K562 (cell line): ENCODE measurements at regions of chr9 and their contacts with region 1.

Region 1: DNA sequence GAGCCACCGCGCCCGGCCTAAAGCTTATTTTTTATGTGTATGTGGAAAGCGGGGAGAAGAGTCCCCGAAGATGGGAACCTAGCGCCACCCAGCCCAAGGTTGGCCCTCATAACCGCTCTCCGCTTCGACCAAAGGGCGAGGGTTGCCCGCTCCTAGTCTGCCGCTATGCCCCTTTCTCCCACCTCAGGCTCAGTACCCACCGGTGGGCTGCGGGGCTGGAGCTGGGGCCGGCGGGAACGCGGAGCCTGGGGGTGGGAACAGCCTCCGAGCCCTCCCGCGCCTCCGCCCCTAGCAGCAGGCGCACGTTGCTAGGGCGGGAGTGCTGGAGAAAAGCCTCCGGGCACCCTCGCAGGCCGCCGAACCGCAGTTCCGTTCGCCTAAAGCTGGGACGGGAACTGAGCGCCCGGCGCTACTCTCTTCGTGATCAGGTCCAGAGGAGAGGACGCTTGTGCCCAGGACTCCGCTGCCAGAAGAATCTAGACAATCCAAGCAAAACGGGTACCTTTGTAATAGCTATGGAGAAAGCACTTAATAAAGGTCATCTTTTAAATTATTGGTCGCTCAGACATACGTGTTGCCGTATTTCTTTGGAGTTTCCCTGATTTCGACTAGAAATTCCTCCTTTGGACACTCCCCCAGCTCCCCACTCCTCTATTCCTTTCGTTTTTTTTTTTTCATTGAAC is at the start of gene WDR31:
- DNase-seq: peak; percentile 92 to 93 (median 93)
- ATAC-seq: peak; percentile 94
- H3K4me3 ChIP-seq: peak within 1 kb of the TSS; percentile 83
- H3K27ac ChIP-seq: peak within 1 kb of the TSS; percentile 58
- H3K4me1 ChIP-seq: peaks cover 13 to 16% of the 10 kb centered on the region in 2 experiments; a peak in 4 of 5 replicates
- H3K27me3 ChIP-seq: no peaks in the 10 kb centered on the region
- CTCF ChIP-seq: no peak
- EP300 ChIP-seq: no peak; the same call in 1 of the 2 replicates
- POLR2A ChIP-seq: peak; percentile 82
- RAD21 ChIP-seq: no peak
- polyA plus RNA-seq, gene WDR31: 0.35 to 0.71 TPM

Region 2: GRCh38 chr9:113011911-113012381 is 328.2 kb before region 1 on chr9 and contains the start of gene ZNF883:
- CTCF ChIA-PET with region 1: no interaction called
- POLR2A ChIA-PET with region 1: no interaction called
- in situ Hi-C with region 1: no loop called
- intact Hi-C with region 1: loop called (anchors 5 kb)
- DNase-seq: peak; percentile 40 to 75 (median 53)
- ATAC-seq: peak; percentile 100
- H3K4me3 ChIP-seq: peak within 1 kb of the TSS; percentile 46
- H3K27ac ChIP-seq: no peak within 1 kb of the TSS; the same call in 2 of the 3 replicates
- H3K4me1 ChIP-seq: no peaks in the 10 kb centered on the region; a peak in 1 of 5 replicates
- H3K27me3 ChIP-seq: no peaks in the 10 kb centered on the region
- CTCF ChIP-seq: no peak
- EP300 ChIP-seq: no peak
- POLR2A ChIP-seq: no peak
- RAD21 ChIP-seq: no peak
- polyA plus RNA-seq, gene ZNF883: 4.0 to 4.1 TPM

Region 3: GRCh38 chr9:113328045-113328782 is 11.9 kb before region 1 on chr9:
- CTCF ChIA-PET with region 1: interaction called, 3 read pairs
- POLR2A ChIA-PET with region 1: interaction called, 10 read pairs
- in situ Hi-C with region 1: no loop called
- intact Hi-C with region 1: no loop called
- DNase-seq: no peak
- ATAC-seq: no peak
- H3K4me3 ChIP-seq: no peak overlapping the region
- H3K27ac ChIP-seq: no peak overlapping the region
- H3K4me1 ChIP-seq: peaks cover 0 to 6% of the 10 kb centered on the region in 2 experiments; a peak in 1 of 5 replicates
- H3K27me3 ChIP-seq: no peaks in the 10 kb centered on the region
- CTCF ChIP-seq: no peak
- EP300 ChIP-seq: no peak
- POLR2A ChIP-seq: no peak
- RAD21 ChIP-seq: no peak